ENCODE measurements at regions of chr9 and their contacts with region 1.

Region 1: GRCh38 chr9:32384364-32385151 is at the start of gene ACO1:
- DNase-seq: peak; percentile 94
- total RNA-seq, gene ACO1: 51.5 TPM

Region 2: DNA sequence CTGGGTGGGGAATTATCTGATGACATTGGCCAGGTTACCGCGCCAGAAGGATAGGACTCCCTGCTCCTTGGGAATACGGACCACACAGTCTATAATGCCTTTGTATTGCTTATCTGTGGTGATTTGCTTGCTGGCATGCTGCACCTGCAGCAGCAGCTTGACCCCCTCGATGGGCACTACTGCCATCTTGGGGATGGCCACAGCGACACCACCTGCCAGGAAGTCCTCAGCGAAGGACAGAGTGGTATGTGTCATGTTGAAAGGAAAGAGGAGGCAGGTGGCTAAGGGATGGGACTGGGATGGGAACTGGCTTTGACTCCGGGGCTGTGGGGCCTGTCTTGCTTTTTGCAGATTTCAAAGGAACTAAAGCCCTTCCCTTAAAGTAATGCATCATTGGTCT is 50.5 kb before region 1 on chr9:
- intact Hi-C with region 1: no loop called
- DNase-seq: no peak

Region 3: GRCh38 chr9:32344551-32345182 is 39.9 kb before region 1 on chr9:
- intact Hi-C with region 1: no loop called
- DNase-seq: no peak

Region 4: DNA sequence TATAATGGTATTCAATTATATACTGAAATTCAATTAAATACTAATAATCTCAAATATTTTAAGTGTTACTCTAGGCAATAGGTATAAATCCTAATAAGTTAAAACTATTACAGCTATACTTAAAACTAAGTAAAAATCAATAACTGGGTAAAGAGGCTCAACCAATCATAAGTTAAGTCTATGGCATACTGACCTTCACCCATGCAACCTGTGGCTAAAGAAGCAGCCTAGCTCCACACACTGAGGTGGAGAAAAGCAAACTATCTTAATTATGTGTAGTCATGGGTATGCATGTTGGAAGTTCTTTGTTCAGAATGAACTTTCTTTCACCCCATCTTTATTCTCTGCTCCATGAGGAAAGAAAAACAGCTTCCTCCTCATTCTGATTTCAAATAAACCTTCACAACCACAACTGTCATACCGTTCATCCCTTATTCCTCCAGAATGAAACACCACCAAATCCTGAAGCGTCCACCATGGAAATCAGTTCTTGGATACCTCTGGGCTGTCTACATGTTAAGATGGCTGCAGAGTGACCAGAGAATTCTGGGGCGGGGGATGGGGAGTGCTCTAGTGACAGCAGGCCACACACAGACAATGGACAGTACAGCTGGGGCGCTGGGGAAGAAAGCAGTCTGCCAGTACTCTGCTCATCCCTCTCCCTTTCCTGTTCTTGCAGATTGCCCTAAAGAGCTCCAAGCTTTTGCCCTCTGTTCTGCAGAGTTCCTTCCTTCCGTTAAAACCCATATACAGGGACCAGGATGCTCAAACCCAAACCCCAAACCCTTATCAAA is 79.1 kb after region 1 on chr9:
- intact Hi-C with region 1: loop called (anchors 10 kb)
- DNase-seq: no peak

Region 5: DNA sequence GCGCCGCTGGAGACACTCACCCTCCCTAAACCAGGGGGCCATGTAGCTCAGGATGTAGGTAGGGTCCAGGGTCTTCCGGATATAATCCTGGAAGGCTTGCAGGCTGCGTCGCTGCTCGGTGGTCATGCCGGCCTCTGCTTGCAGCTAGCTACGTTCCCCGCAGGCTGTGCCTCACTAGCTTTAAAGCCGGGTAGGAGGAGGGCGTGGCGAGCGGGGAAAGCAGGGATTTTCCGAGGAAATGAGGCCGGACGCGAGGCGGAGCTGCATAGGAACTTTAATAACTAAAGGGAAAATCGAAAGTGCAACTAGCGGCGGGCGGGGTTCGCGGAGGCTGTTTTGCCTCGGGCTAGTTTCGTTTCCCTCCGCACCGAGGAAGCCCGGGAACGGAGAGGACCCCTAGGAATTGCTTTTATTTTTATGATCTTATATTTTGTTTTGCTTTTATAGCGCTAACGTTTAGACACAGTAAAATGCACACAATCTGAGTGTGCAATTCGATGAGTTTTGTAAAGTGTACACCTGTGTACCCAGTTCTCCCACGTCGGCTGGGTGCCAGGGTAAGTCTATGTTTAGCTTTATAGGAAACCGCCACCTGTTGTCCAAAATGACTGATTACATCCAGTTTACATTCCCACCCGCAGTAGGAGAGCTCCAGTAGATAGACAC is 141.6 kb after region 1 on chr9 and contains the start of gene RIGI:
- intact Hi-C with region 1: loop called (anchors 5 kb)
- DNase-seq: peak; percentile 97
- total RNA-seq, gene RIGI: 2.8 TPM

Region 6: GRCh38 chr9:32571969-32572899 is 187.7 kb after region 1 on chr9:
- intact Hi-C with region 1: loop called (anchors 5 kb)
- DNase-seq: no peak

Region 7: DNA sequence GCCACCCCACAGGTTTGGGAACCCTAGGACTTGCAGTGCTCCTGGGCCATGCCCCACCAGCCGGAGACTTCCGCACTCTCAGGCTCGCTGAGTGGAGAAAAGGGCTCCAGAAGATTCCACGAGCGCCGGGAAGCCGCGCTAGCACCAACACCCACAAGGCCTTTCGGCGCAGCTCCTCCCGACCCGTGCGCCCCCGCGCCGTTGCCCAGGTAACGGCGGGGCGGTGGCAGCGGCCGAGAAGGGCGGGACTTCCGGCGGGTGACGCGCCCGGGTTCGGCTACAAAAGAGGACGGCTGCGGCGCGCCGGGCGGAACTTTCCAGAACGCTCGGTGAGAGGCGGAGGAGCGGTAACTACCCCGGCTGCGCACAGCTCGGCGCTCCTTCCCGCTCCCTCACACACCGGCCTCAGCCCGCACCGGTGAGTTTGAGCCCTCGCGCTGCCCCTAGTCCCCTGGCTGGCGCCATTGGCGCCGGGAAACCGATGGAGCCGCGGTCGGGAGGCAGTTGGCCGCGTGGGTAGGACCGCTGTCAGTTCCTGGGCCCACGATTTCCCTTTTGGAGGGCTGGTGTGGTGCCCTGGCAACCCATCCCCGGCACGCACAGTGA is 640.5 kb after region 1 on chr9 and contains the start of gene DNAJA1:
- intact Hi-C with region 1: loop called (anchors 10 kb)
- DNase-seq: peak; percentile 98
- total RNA-seq, gene DNAJA1: 87.6 TPM